ENCODE measurements at regions of chr17 and their contacts with region 1.

Region 1: GRCh38 chr17:75271233-75271954 is 363 bp upstream of the MIF4GD start:
- DNase-seq: peak; percentile 97
- H3K4me3 ChIP-seq: peak overlapping the region; percentile 90
- H3K27ac ChIP-seq: peak overlapping the region; percentile 77
- H3K4me1 ChIP-seq: peaks cover 42% of the 10 kb centered on the region
- CTCF ChIP-seq: peak; percentile 69

Region 2: GRCh38 chr17:75182569-75183450 is 88.6 kb before region 1 on chr17 and contains the start of gene SUMO2:
- CTCF ChIA-PET with region 1: no interaction called
- POLR2A ChIA-PET with region 1: interaction called, 4 read pairs
- intact Hi-C with region 1: loop called (anchors 2 kb)
- DNase-seq: peak; percentile 100
- H3K4me3 ChIP-seq: peak within 1 kb of the TSS; percentile 88
- H3K27ac ChIP-seq: peak within 1 kb of the TSS; percentile 91
- H3K4me1 ChIP-seq: peaks cover 24% of the 10 kb centered on the region
- CTCF ChIP-seq: peak; percentile 41; the same call in 1 of the 2 replicates
- total RNA-seq, gene SUMO2: 286 and 296 TPM in 2 replicates

Region 3: DNA sequence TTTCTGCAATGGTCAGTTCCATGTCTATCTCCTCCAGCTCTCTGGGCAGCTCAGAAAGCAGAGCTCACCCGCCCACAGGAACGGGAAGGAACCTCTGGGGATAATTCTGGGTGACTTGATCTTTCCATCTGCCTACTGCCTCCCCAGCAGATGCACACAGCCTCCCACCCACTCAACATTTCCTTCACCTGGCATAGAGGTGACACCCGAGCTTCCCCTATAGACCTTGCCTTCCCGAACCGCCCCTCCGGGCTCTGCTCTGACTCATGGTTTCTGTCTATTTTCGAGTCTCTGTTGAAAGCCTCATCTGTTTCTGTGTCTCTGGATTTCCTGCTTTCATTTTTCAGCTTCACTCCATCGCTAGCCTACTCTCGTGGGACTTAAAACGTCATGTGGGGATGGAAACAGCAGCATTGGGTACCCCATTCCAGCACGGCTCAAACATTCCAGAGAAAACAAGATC is 21.4 kb before region 1 on chr17:
- CTCF ChIA-PET with region 1: interaction called, 3 read pairs
- POLR2A ChIA-PET with region 1: interaction called, 11 read pairs
- intact Hi-C with region 1: no loop called
- DNase-seq: peak; percentile 50
- H3K4me3 ChIP-seq: peak overlapping the region; percentile 9
- H3K27ac ChIP-seq: peak overlapping the region; percentile 39
- H3K4me1 ChIP-seq: peaks cover 50% of the 10 kb centered on the region
- CTCF ChIP-seq: no peak

Region 4: DNA sequence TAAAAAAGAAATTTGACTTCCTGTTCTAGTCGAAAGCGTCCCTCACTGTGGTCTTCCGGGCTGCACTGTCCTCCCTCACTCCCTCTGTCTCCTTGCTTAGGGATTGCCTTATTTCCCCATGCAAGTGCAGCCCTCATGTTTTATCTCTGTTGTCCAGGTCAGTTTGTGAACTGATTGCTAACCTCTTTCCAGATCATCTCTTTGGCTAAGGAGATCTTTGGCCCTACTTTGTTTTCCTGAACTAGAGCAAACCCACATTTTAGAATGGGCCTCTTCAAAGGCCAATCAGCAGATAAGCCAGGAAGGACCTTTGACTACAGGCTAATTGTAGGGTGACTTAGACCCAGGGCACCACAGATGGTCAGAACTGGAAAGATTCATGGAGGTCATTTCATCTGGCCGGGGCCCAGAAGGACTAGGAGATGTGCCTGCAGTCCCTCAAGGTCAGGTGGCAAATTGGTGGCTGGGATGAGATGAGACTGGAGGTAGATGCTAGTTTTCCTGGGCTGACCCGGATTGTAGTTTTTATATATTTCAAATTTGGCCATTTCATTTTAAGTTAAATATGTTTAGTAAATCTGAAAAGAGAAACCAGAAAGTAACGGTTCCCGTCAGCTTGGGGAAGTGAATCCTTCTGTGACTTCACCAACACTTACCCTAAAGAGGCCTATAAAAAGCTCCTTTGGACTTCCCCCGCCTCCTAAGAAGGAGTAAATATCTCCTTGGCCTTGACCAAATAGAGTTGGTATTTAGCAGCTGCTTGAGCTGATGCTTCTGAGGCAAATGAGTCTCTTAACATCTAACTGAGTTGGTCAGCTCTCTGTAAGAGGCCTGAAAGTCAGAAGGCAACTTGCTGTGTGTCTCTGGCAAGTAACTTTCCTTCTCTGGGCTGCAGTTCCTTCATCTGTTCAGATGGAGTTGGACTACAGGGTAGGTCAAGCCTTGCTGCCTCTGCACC is 24.1 kb after region 1 on chr17:
- CTCF ChIA-PET with region 1: interaction called, 3 read pairs
- POLR2A ChIA-PET with region 1: interaction called, 22 read pairs
- intact Hi-C with region 1: no loop called
- DNase-seq: peak; percentile 94
- H3K4me3 ChIP-seq: peak overlapping the region; percentile 62
- H3K27ac ChIP-seq: peak overlapping the region; percentile 95
- H3K4me1 ChIP-seq: peaks cover 90% of the 10 kb centered on the region
- CTCF ChIP-seq: no peak

Region 5: GRCh38 chr17:75412455-75413317 is 141.3 kb after region 1 on chr17:
- CTCF ChIA-PET with region 1: interaction called, 3 read pairs
- POLR2A ChIA-PET with region 1: interaction called, 6 read pairs
- intact Hi-C with region 1: loop called (anchors 1 kb)
- DNase-seq: peak; percentile 95
- H3K4me3 ChIP-seq: peak overlapping the region; percentile 50
- H3K27ac ChIP-seq: peak overlapping the region; percentile 60
- H3K4me1 ChIP-seq: peaks cover 54% of the 10 kb centered on the region
- CTCF ChIP-seq: peak; percentile 97

Region 6: DNA sequence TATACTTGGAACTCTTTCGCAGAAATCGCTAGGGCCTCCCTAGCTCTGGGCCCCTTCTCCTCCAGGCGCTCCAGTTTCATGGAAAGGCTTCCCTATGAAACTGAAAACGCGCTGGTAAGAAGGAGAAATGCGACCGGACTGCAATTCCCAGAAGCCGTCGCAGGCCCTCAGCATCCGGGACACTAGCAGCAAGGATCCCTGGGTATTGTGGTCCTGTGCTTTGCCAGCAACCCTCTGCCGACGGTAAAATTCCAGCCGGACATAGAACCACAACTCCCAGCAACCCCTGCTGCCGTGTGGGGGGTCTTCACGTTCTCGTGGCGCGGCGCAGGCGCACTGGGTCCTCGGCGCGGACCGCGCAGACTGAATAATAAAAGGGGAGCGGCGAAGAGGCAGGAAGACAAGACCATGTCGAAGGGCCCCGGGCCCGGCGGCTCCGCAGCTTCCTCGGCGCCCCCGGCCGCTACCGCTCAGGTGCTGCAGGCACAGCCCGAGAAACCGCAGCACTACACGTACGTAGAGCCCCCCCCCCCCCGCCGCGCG is 513.1 kb after region 1 on chr17 and contains the start of gene UNK:
- CTCF ChIA-PET with region 1: no interaction called
- POLR2A ChIA-PET with region 1: interaction called, 3 read pairs
- intact Hi-C with region 1: loop called (anchors 10 kb)
- DNase-seq: peak; percentile 100
- H3K4me3 ChIP-seq: peak within 1 kb of the TSS; percentile 76
- H3K27ac ChIP-seq: peak within 1 kb of the TSS; percentile 91
- H3K4me1 ChIP-seq: peaks cover 54% of the 10 kb centered on the region
- CTCF ChIP-seq: no peak
- total RNA-seq, gene UNK: 41.5 and 44.0 TPM in 2 replicates

Measured in OCI-LY7 (cell line).